ENCODE measurements at regions of chr7 and their contacts with region 1.

Region 1: GRCh38 chr7:143345428-143345900 is 17.0 kb downstream of the FAM131B start:
- DNase-seq: peak in 1 of 2 donors; percentile 48
- ATAC-seq: peak in 7 of 8 donors; percentile 59 to 82 (median 67)
- H3K4me3 ChIP-seq: peak overlapping the region in 4 of 10 donors; percentile 6 to 34 (median 23)
- H3K27ac ChIP-seq: no peak overlapping the region
- H3K4me1 ChIP-seq: peaks cover 0 to 11% (median 0%) of the 10 kb centered on the region in 9 donors
- H3K27me3 ChIP-seq: peaks cover 0 to 50% (median 30%) of the 10 kb centered on the region in 7 donors
- CTCF ChIP-seq: peak in 8 of 9 donors; percentile 21 to 64 (median 48)

Region 2: DNA sequence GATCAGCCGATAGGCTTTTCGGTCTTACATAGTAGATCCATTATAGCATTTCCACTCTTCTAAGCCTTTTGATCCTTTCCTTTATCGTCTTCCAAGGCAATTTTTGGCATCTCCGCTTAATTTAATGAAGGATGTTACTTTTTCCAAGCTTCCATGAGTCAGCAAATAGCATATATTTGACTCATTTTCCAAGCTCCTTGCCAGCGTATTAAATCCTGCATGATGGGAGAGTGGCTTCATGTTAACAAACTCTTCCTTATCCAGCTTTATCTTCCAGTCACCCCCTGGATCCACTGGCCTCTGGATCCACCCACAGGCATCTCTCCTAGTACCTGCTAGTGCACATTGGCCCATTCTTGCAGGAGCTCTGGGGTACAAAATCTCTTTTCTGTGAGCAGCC is 331.6 kb before region 1 on chr7:
- intact Hi-C with region 1: no loop called
- DNase-seq: no peak
- ATAC-seq: peak in 4 of 8 donors; percentile 33 to 44 (median 42)
- H3K4me3 ChIP-seq: no peak overlapping the region
- H3K27ac ChIP-seq: peak overlapping the region in 3 of 10 donors; percentile 5 to 47 (median 31)
- H3K4me1 ChIP-seq: peaks cover 0 to 10% (median 4%) of the 10 kb centered on the region in 9 donors
- H3K27me3 ChIP-seq: peaks cover 0 to 15% (median 0%) of the 10 kb centered on the region in 7 donors
- CTCF ChIP-seq: no peak

Region 3: GRCh38 chr7:143408686-143409561 is 63.5 kb after region 1 on chr7 and contains the start of gene EPHA1:
- intact Hi-C with region 1: loop called in 1 of 10 experiments (anchors 5 kb)
- DNase-seq: no peak
- ATAC-seq: peak in 2 of 8 donors; percentile 16 to 18
- H3K4me3 ChIP-seq: peak within 1 kb of the TSS in 6 of 10 donors; percentile 13 to 47 (median 20)
- H3K27ac ChIP-seq: no peak within 1 kb of the TSS
- H3K4me1 ChIP-seq: peaks cover 3 to 66% (median 15%) of the 10 kb centered on the region in 9 donors
- H3K27me3 ChIP-seq: peaks cover 0 to 16% (median 4%) of the 10 kb centered on the region in 7 donors
- CTCF ChIP-seq: peak in 8 of 9 donors; percentile 8 to 50 (median 36)
- total RNA-seq, gene EPHA1: 0.39 TPM in 1 of 10 donors, not detected in the others

Region 4: GRCh38 chr7:143456992-143457793 is 111.7 kb after region 1 on chr7:
- intact Hi-C with region 1: no loop called
- DNase-seq: no peak
- ATAC-seq: no peak
- H3K4me3 ChIP-seq: no peak overlapping the region
- H3K27ac ChIP-seq: no peak overlapping the region
- H3K4me1 ChIP-seq: peaks cover 0 to 5% (median 0%) of the 10 kb centered on the region in 9 donors
- H3K27me3 ChIP-seq: no peaks in the 10 kb centered on the region
- CTCF ChIP-seq: no peak